ENCODE measurements at regions of chr17 and their contacts with region 1.

Region 1: GRCh38 chr17:70168977-70169708 is at the start of gene KCNJ2:
- DNase-seq: peak; percentile 94
- ATAC-seq: peak; percentile 91
- H3K4me3 ChIP-seq: peak within 1 kb of the TSS; percentile 72
- H3K27ac ChIP-seq: no peak within 1 kb of the TSS
- H3K4me1 ChIP-seq: peaks cover 11% of the 10 kb centered on the region
- H3K27me3 ChIP-seq: peaks cover 34% of the 10 kb centered on the region
- CTCF ChIP-seq: no peak
- total RNA-seq, gene KCNJ2: 0.36 TPM in 1 of 2 replicates, not detected in the other

Region 2: GRCh38 chr17:69327060-69327831 is 841.9 kb before region 1 on chr17 and contains the start of gene ABCA5:
- CTCF ChIA-PET with region 1: no interaction called
- POLR2A ChIA-PET with region 1: no interaction called
- intact Hi-C with region 1: loop called (anchors 10 kb)
- DNase-seq: peak; percentile 99
- ATAC-seq: peak; percentile 88
- H3K4me3 ChIP-seq: peak within 1 kb of the TSS; percentile 74
- H3K27ac ChIP-seq: no peak within 1 kb of the TSS; the same call in 1 of the 2 replicates
- H3K4me1 ChIP-seq: peaks cover 18% of the 10 kb centered on the region
- H3K27me3 ChIP-seq: no peaks in the 10 kb centered on the region
- CTCF ChIP-seq: no peak
- total RNA-seq, gene ABCA5: 7.0 and 9.4 TPM in 2 replicates

Region 3: DNA sequence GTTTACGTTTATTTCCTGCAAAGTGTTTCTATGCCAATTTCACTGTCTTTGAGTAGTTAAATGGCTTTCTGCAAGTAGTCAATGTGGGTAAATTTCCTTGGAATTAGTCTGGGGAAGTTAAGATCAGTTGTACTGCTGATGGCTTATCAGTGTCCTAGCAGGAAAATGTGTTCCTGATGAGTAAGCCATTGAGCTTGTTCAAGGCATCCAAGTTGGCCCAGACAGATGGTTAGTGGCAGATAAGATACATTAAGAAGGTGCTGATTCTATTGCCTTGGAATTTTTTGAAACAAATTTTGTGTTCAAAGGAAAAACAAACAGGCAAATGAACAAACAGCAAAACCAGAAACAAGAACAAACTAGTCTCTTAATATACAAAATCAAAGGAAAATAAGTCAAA is 496.2 kb before region 1 on chr17:
- CTCF ChIA-PET with region 1: no interaction called
- POLR2A ChIA-PET with region 1: no interaction called
- intact Hi-C with region 1: loop called (anchors 1 kb)
- DNase-seq: peak; percentile 46
- ATAC-seq: peak; percentile 31
- H3K4me3 ChIP-seq: no peak overlapping the region
- H3K27ac ChIP-seq: no peak overlapping the region
- H3K4me1 ChIP-seq: peaks cover 7% of the 10 kb centered on the region
- H3K27me3 ChIP-seq: no peaks in the 10 kb centered on the region
- CTCF ChIP-seq: no peak

Region 4: DNA sequence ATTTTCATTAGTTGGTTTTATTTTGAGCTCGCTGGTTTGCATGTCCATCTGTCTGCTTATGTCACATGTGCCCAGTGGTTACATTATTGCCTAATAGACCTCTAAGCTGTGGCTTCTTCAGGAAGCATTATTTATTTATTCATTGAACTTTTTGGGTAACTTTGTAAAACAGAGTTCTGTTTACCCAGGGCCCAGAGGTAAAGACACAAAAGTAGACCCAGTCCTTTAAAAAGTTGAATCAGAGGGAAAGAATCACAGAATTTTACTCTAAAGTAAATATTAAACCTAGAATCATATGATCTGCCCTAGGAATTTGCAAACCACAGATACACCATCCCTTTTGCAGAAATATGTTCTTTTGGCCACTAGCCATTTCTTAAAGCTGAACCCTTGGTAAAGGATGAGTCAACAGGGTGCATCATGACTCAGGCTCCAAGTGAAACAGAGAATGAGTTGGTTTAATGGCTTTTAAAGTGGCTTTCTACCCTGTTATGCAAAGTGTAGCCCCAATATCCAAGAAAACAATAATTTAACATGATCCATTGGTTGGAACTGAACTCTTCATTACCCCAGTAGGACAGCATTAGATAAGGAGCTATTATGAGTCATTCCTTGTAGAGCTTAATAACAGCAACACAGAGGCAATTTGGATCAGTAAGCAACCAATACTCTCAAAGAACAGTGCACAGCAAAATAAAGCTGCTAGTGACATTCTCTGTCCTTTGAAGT is 236.5 kb after region 1 on chr17:
- CTCF ChIA-PET with region 1: no interaction called
- POLR2A ChIA-PET with region 1: interaction called, 5 read pairs
- intact Hi-C with region 1: loop called (anchors 1 kb)
- DNase-seq: peak; percentile 99
- ATAC-seq: peak; percentile 95
- H3K4me3 ChIP-seq: peak overlapping the region; percentile 33; the same call in 1 of the 2 replicates
- H3K27ac ChIP-seq: peak overlapping the region; percentile 72
- H3K4me1 ChIP-seq: peaks cover 24% of the 10 kb centered on the region
- H3K27me3 ChIP-seq: no peaks in the 10 kb centered on the region
- CTCF ChIP-seq: no peak

Region 5: DNA sequence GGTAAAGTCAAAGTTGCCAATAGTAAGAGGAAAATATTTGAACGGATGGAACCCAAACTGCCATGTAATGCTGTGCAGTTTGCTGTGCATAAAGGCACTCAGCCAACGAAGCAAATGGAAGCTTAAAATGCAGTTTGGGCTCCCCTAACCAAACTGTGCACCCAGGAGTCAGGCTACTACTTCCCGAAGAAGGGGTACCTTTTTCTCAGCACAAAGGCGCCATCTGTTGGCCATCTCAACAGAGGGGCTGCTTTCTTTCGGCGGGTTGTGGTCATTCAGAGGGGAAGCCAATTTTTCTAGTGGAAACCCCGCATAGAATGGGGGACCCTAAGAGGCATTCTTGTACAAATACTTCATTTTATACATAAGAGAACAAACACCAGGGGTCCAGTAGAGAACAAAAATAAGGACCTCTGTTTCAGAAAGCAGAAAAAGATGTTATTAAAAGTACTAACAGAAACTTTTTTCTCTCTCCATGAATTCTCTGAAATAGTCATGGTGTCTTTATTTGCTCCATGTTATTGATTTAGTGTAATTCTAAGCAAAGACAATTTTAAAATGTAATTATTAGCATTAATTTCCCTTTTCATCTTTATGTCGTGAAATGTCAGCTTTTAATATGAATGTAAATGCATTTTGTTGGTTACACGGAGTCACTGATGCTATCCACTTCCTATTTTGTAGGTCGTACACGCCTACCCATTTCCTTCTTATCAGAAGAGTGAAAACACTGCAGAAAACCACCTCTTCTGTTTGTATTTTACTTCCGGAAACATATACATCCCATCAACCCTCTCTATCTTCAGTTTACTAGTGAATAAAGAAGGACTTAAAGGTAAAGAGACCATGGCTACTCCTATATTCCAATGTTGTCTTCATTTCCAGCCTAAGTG is 453.5 kb after region 1 on chr17:
- CTCF ChIA-PET with region 1: interaction called, 3 read pairs
- POLR2A ChIA-PET with region 1: no interaction called
- intact Hi-C with region 1: loop called (anchors 1 kb)
- DNase-seq: peak; percentile 80
- ATAC-seq: peak; percentile 90
- H3K4me3 ChIP-seq: peak overlapping the region; percentile 4; the same call in 1 of the 2 replicates
- H3K27ac ChIP-seq: no peak overlapping the region
- H3K4me1 ChIP-seq: peaks cover 3% of the 10 kb centered on the region; the same call in 1 of the 2 replicates
- H3K27me3 ChIP-seq: no peaks in the 10 kb centered on the region
- CTCF ChIP-seq: peak; percentile 97